ENCODE measurements at regions of chr5 and their contacts with region 1.

Region 1: GRCh38 chr5:133368916-133369783 is 243.2 kb downstream of the FSTL4 start:
- DNase-seq: no peak
- ATAC-seq: no peak
- H3K4me3 ChIP-seq: no peak overlapping the region
- H3K27ac ChIP-seq: no peak overlapping the region
- H3K4me1 ChIP-seq: peaks cover 0 to 6% (median 0%) of the 10 kb centered on the region in 12 donors
- H3K27me3 ChIP-seq: peaks cover 0 to 13% (median 0%) of the 10 kb centered on the region in 9 donors
- CTCF ChIP-seq: no peak
- POLR2A ChIP-seq: no peak

Region 2: GRCh38 chr5:132981288-132981687 is 387.9 kb before region 1 on chr5:
- intact Hi-C with region 1: no loop called
- DNase-seq: no peak
- ATAC-seq: no peak
- H3K4me3 ChIP-seq: no peak overlapping the region
- H3K27ac ChIP-seq: no peak overlapping the region
- H3K4me1 ChIP-seq: no peaks in the 10 kb centered on the region
- H3K27me3 ChIP-seq: no peaks in the 10 kb centered on the region
- CTCF ChIP-seq: no peak
- POLR2A ChIP-seq: no peak

Region 3: GRCh38 chr5:133316427-133316826 is 52.7 kb before region 1 on chr5:
- intact Hi-C with region 1: loop called in 1 of 10 experiments (anchors 2 kb)
- DNase-seq: no peak
- ATAC-seq: no peak
- H3K4me3 ChIP-seq: no peak overlapping the region
- H3K27ac ChIP-seq: no peak overlapping the region
- H3K4me1 ChIP-seq: no peaks in the 10 kb centered on the region
- H3K27me3 ChIP-seq: peaks cover 0 to 16% (median 0%) of the 10 kb centered on the region in 9 donors
- CTCF ChIP-seq: no peak
- POLR2A ChIP-seq: no peak

Region 4: DNA sequence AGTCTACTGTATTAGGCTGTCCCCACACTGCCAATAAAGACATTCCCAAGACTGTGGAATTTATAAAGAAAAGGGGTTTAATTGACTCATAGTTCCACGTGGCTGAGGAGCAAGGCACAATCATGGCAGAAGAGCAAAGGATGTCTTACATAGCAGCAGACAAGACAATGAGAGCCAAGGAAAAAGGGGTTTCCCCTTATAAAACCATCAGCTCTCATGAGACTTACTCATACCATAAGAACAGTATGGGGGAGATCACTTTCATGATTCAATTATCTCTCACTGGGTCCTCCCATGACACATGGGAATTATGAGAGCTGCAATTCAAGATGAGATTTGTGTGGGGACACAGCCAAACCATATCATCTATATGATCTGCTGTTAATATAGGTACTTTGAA is 258.0 kb after region 1 on chr5:
- intact Hi-C with region 1: no loop called
- DNase-seq: no peak
- ATAC-seq: no peak
- H3K4me3 ChIP-seq: no peak overlapping the region
- H3K27ac ChIP-seq: no peak overlapping the region
- H3K4me1 ChIP-seq: no peaks in the 10 kb centered on the region
- H3K27me3 ChIP-seq: peaks cover 0 to 4% (median 0%) of the 10 kb centered on the region in 9 donors
- CTCF ChIP-seq: no peak
- POLR2A ChIP-seq: no peak

Measured in heart left ventricle (tissue), 16 donors.